Activated naive CD4-positive, alpha-beta T cell treated with anti-CD3 and anti-CD28 coated beads for 36 hours (primary cell): ENCODE measurements at regions of chr3 and their contacts with region 1.

Region 1: DNA sequence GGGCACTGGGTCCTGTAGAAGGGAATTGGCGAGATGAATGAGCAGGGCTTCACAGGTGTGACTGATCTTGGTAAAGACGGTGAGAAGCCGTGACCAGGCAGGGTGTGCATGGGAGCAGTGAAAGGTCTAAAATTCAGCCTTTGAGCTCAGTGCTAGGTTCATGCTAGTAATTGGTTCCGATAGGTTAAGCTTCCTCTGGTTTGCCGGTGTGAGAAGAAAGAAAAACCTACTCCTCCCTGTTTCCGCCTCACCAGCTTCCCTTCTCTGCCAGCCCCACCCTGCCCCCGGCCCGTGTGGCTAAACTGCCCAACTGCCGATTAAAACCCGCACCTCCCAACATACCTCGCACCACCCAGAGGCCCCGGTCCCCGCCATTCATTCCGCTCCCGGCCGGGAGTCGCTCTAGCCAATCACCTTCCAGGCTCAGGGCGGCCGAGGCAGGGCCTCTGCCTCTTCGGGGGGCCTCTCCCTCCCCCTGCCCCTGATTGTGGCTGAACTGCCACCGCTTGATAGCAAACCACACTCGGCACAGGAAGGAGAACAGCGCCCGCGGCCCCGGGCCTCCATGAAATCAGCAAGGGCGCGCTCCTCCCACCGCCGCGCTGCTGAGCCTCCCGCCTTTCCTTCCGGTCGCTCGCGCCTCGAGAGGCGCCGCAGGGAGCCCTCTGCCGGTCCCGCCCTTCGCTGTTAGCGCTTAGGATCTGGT is 7.3 kb upstream of the NRROS start:
- DNase-seq: peak; percentile 90
- H3K4me3 Mint-ChIP-seq: peak overlapping the region; percentile 88
- H3K27ac Mint-ChIP-seq: peak overlapping the region; percentile 97
- H3K4me1 Mint-ChIP-seq: peaks cover 48% of the 10 kb centered on the region
- H3K27me3 Mint-ChIP-seq: no peaks in the 10 kb centered on the region

Region 2: DNA sequence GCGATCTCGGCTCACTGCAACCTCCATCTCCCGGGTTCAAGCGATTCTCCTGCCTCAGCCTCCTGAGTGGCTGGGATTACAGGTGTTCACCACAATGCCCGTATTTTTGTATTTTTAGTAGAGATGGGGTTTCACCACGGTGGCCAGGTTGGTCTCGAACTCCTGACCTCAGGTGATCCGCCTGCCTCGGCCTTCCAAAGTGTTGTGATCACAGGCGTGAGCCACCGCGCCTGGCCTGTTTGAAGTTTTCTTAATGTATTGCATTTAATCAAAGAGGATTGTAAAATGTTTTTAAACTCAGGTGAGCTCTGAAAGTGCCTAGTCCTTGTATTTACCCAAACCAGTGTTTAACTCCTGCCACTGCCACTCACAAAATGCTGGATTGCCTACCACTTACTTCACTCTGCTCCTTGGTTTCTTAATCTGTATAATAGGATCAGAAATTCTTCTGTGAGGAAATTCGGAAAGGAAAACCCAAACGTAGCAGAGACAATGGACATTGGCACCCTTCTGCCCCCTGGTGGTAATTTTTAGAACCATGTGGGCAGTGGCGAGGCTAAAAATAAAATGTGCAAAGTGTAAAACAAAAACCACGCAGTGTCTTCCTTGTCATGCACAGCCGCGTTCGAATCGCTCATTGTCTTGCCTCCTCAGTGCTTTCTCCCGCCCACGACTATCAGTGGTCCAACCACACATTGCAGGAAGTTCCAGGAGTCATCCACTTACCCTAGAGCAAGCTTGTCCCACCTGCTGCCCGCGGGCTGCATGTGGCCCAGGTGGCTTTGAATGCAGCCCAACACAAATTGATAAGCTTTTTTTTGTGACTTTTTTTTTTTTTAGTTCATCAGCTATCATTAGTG is 52.6 kb after region 1 on chr3:
- CTCF ChIA-PET with region 1: interaction called, 6 read pairs
- intact Hi-C with region 1: loop called (anchors 1 kb)
- DNase-seq: peak; percentile 74
- H3K4me3 Mint-ChIP-seq: peak overlapping the region; percentile 45
- H3K27ac Mint-ChIP-seq: no peak overlapping the region
- H3K4me1 Mint-ChIP-seq: peaks cover 12% of the 10 kb centered on the region
- H3K27me3 Mint-ChIP-seq: no peaks in the 10 kb centered on the region